ENCODE measurements at regions of chr20 and their contacts with region 1.

Region 1: DNA sequence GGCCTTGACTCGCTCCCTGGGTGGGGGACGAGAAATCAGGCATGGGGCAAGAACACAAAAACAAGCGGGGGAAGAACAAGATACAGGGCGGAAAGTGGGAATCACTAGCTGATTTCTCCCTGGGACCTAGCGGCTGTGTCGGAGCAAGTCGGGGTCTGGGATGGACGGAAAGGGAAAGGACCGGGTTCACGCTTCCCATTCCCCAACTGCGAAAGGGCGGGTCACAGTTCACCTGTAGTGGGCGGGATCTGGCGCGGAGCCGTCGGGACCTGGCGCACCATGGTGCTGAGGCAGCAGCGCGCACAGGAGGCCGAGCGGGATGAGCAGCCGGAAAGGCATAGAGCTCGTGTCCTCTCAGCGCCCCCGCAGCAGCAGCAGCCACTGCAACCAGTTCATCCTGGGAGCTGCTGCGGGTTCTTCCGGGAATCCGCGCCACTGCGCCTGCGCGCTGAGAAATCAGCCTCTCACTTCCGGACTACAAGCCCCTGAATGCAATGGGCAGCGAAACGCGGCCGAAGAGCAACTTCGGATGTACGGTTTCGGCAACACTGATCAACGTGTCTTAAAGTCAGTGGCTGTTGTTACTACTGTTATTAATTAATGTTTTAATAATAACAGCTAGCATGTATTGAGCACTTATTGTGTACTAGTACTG is at the start of gene EDEM2:
- DNase-seq: peak; percentile 89 to 98 (median 95)

Region 2: DNA sequence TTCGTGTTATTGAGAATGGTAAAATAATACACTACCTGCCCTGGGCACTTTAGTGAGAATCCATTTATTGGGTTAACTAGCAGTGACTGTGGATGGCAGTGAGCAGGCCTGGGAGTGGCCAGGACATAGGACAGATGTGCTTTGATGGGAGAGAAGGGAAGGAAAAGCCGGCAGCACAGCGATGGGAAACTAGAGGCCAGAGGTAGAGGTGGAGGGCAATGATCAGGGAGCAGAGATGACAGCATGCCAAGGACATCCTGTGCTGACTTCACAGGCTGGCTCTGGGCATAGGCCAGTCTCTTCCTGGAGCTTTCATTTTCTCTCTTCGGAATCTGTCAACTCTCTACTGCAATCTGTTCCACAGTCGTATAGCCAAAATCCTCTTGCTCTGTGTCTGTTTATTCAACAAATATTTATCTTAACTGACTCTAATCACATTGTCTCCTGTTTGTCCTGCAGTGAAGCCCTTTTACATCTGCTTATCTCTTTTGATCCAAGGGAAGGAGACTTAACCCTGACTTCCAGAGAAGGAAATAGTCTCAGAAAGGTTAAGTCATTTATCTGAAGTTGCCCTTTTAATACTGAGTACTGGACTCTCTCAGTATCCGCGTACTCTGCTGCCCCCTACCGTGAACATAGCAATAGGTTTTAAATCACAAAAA is 61.0 kb after region 1 on chr20:
- intact Hi-C with region 1: loop called (anchors 10 kb)
- DNase-seq: peak; percentile 48 to 93 (median 80)

Measured in head of caudate nucleus (tissue), 42 donors.